SK-N-SH (cell line): ENCODE measurements at regions of chr10 and their contacts with region 1.

Region 1: GRCh38 chr10:28241741-28242399 is 61.0 kb downstream of the MPP7 start:
- DNase-seq: peak; percentile 40
- H3K4me3 ChIP-seq: no peak overlapping the region; a peak in 1 of 4 replicates
- H3K27ac ChIP-seq: no peak overlapping the region
- H3K4me1 ChIP-seq: no peaks in the 10 kb centered on the region
- H3K27me3 ChIP-seq: peaks cover 22% of the 10 kb centered on the region; the same call in 1 of the 2 replicates
- CTCF ChIP-seq: peak; percentile 96
- EP300 ChIP-seq: no peak
- RAD21 ChIP-seq: peak; percentile 75

Region 2: DNA sequence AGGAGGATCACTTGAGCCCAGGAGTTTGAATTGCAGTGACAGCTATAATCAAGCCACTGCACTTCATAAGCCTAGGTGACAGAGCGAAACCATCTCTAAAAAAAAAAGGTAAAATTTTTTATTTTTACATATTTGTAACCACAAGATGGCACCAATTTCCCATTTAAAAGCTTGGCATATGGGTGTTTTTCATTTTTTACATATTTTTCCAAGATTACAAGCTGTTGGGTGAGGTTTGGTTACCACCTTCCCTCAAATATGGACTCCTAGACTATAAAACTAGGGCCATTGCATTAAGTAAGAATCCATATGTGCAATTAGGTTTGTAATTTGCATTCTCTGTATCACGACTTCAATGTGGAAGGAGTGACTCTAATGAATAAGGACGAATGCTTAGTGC is 872.0 kb before region 1 on chr10:
- CTCF ChIA-PET with region 1: interaction called, 13 read pairs
- POLR2A ChIA-PET with region 1: no interaction called
- DNase-seq: no peak
- H3K4me3 ChIP-seq: no peak overlapping the region
- H3K27ac ChIP-seq: no peak overlapping the region
- H3K4me1 ChIP-seq: no peaks in the 10 kb centered on the region
- H3K27me3 ChIP-seq: peaks cover 19% of the 10 kb centered on the region; the same call in 1 of the 2 replicates
- CTCF ChIP-seq: peak; percentile 49
- EP300 ChIP-seq: no peak
- RAD21 ChIP-seq: peak; percentile 48

Region 3: GRCh38 chr10:28219251-28219650 is 22.6 kb before region 1 on chr10:
- CTCF ChIA-PET with region 1: interaction called, 14 read pairs
- POLR2A ChIA-PET with region 1: no interaction called
- DNase-seq: no peak
- H3K4me3 ChIP-seq: no peak overlapping the region
- H3K27ac ChIP-seq: no peak overlapping the region
- H3K4me1 ChIP-seq: no peaks in the 10 kb centered on the region
- H3K27me3 ChIP-seq: peaks cover 10% of the 10 kb centered on the region; the same call in 1 of the 2 replicates
- CTCF ChIP-seq: no peak
- EP300 ChIP-seq: no peak
- RAD21 ChIP-seq: no peak

Region 4: GRCh38 chr10:28381903-28382347 is 140.1 kb after region 1 on chr10:
- CTCF ChIA-PET with region 1: interaction called, 11 read pairs
- POLR2A ChIA-PET with region 1: no interaction called
- DNase-seq: peak; percentile 62
- H3K4me3 ChIP-seq: peak overlapping the region in 1 of 2 experiments; percentile 32; a peak in 1 of 4 replicates
- H3K27ac ChIP-seq: no peak overlapping the region
- H3K4me1 ChIP-seq: no peaks in the 10 kb centered on the region
- H3K27me3 ChIP-seq: peaks cover 42% of the 10 kb centered on the region; the same call in 1 of the 2 replicates
- CTCF ChIP-seq: peak; percentile 96
- EP300 ChIP-seq: no peak
- RAD21 ChIP-seq: peak; percentile 89

Region 5: GRCh38 chr10:28393966-28394568 is 152.2 kb after region 1 on chr10:
- CTCF ChIA-PET with region 1: interaction called, 10 read pairs
- POLR2A ChIA-PET with region 1: no interaction called
- DNase-seq: peak; percentile 69
- H3K4me3 ChIP-seq: peak overlapping the region in 1 of 2 experiments; percentile 24; a peak in 1 of 4 replicates
- H3K27ac ChIP-seq: no peak overlapping the region
- H3K4me1 ChIP-seq: no peaks in the 10 kb centered on the region
- H3K27me3 ChIP-seq: peaks cover 16% of the 10 kb centered on the region; the same call in 1 of the 2 replicates
- CTCF ChIP-seq: peak; percentile 96
- EP300 ChIP-seq: no peak
- RAD21 ChIP-seq: peak; percentile 61

Region 6: DNA sequence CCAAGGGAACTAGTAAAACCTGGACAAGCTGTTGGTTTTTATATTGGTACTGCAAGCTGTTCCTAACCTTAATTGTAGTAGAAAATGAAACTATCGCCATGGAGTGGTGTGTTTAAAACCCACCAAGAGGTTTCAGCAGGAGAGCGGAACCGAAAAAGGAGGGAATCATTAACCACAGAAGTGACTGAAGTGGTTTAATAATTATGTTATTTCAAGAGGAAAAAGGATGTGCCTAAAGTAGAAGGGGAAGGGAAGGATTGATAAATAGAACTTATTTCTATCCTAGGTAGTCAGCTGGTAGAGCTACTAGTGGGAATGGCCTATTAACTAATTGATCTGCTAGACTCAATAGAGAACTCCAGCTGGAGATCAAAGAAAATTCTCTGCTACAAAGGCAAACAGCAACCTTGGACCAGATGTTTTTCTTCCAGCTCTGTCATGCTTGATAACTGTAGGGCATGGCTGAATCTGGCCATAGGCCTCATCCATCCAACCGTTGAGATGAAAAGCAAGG is 527.3 kb after region 1 on chr10:
- CTCF ChIA-PET with region 1: no interaction called
- POLR2A ChIA-PET with region 1: no interaction called
- DNase-seq: no peak
- H3K4me3 ChIP-seq: no peak overlapping the region
- H3K27ac ChIP-seq: no peak overlapping the region
- H3K4me1 ChIP-seq: no peaks in the 10 kb centered on the region; a peak in 1 of 4 replicates
- H3K27me3 ChIP-seq: peaks cover 6% of the 10 kb centered on the region; the same call in 1 of the 2 replicates
- CTCF ChIP-seq: no peak
- EP300 ChIP-seq: no peak
- RAD21 ChIP-seq: no peak